ENCODE measurements at regions of chr10 and their contacts with region 1.

Region 1: GRCh38 chr10:103192451-103193106 is 493 bp downstream of the NT5C2 start:
- DNase-seq: peak; percentile 59
- ATAC-seq: peak; percentile 47
- H3K4me3 Mint-ChIP-seq: peak overlapping the region; percentile 99
- H3K27ac Mint-ChIP-seq: peak overlapping the region; percentile 96
- H3K4me1 Mint-ChIP-seq: peaks cover 47% of the 10 kb centered on the region
- H3K27me3 Mint-ChIP-seq: no peaks in the 10 kb centered on the region
- CTCF ChIP-seq: no peak

Region 2: DNA sequence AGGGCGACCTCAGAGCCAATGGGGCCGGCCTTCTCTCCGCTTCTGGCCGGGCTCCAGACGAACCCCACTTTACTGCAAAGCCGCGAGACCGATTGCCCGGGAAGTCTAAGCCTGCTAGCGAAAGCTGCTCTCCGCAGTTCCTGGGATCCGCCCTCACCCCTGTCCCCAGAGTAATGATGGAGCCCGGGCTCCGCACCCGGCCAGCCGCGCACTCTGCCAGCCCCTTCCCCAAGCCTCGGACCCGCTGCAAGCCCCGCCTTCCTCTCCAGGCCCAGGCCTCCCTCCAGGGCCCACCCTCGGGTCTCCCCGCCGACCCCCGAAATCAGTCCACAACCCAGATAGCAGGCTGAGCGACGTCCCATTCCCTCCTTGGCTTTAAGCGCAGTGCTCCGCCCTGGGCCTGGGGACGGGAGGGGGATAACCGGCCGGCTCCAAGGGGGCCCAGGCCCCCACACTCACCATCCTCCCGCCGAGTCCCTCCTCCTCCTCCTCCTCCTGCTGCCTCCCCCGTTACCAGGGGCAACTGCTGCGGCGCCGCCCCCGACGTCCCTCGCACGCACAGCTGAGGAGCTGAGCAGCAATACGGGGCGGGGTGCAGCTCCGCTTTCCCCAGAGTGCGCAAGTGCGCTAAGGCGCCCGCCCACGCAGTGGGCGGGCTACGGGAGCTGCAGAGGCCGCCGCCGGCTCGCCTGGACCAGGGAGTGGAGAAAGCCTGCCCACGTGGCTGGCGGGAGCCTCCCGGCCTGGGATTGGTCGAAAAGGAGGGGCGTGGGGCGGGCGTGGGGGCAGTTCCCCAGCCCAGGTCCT is 478.6 kb before region 1 on chr10 and contains the start of gene ARL3:
- CTCF ChIA-PET with region 1: no interaction called
- POLR2A ChIA-PET with region 1: interaction called, 5 read pairs
- intact Hi-C with region 1: loop called (anchors 5 kb)
- DNase-seq: peak; percentile 89
- ATAC-seq: peak; percentile 85
- H3K4me3 Mint-ChIP-seq: peak within 1 kb of the TSS; percentile 95
- H3K27ac Mint-ChIP-seq: peak within 1 kb of the TSS; percentile 92
- H3K4me1 Mint-ChIP-seq: peaks cover 44% of the 10 kb centered on the region
- H3K27me3 Mint-ChIP-seq: no peaks in the 10 kb centered on the region
- CTCF ChIP-seq: no peak
- total RNA-seq, gene ARL3: 4.1 and 5.1 TPM in 2 replicates

Region 3: GRCh38 chr10:102853944-102854694 is 338.5 kb before region 1 on chr10 and contains the start of gene BORCS7:
- CTCF ChIA-PET with region 1: no interaction called
- POLR2A ChIA-PET with region 1: interaction called, 6 read pairs
- intact Hi-C with region 1: loop called (anchors 1 kb)
- DNase-seq: peak; percentile 72
- ATAC-seq: peak; percentile 99
- H3K4me3 Mint-ChIP-seq: peak within 1 kb of the TSS; percentile 97
- H3K27ac Mint-ChIP-seq: peak within 1 kb of the TSS; percentile 98
- H3K4me1 Mint-ChIP-seq: peaks cover 19% of the 10 kb centered on the region
- H3K27me3 Mint-ChIP-seq: no peaks in the 10 kb centered on the region
- CTCF ChIP-seq: no peak
- total RNA-seq, gene BORCS7: 12.1 and 17.4 TPM in 2 replicates

Region 4: GRCh38 chr10:103139803-103140202 is 52.8 kb before region 1 on chr10:
- CTCF ChIA-PET with region 1: no interaction called
- POLR2A ChIA-PET with region 1: interaction called, 5 read pairs
- intact Hi-C with region 1: loop called (anchors 2 kb)
- DNase-seq: no peak
- ATAC-seq: no peak
- H3K4me3 Mint-ChIP-seq: no peak overlapping the region
- H3K27ac Mint-ChIP-seq: no peak overlapping the region
- H3K4me1 Mint-ChIP-seq: peaks cover 11% of the 10 kb centered on the region
- H3K27me3 Mint-ChIP-seq: no peaks in the 10 kb centered on the region
- CTCF ChIP-seq: no peak

Region 5: DNA sequence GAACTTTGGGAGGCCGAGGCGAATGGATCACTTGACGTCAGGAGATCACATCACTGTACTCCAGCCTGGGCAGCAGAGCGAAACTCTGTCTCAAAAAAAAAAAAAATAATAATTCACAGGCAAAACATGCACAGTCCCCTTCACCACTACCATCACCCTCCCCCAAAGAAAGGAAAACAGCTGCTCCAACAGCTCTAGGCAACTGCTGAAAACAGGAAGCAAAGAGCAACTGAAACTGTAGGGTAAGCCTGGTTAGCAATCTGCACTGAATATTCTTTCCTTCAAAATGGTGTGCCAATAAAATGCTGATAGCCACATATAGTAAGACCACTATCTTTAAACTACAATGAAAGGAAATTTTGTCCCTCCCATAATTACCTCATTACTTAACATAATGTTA is 11.3 kb before region 1 on chr10:
- CTCF ChIA-PET with region 1: interaction called, 5 read pairs
- POLR2A ChIA-PET with region 1: interaction called, 46 read pairs
- intact Hi-C with region 1: loop called (anchors 1 kb)
- DNase-seq: no peak
- ATAC-seq: peak; percentile 92
- H3K4me3 Mint-ChIP-seq: peak overlapping the region; percentile 68
- H3K27ac Mint-ChIP-seq: peak overlapping the region; percentile 89
- H3K4me1 Mint-ChIP-seq: peaks cover 77% of the 10 kb centered on the region
- H3K27me3 Mint-ChIP-seq: no peaks in the 10 kb centered on the region
- CTCF ChIP-seq: no peak

Measured in activated B cell treated with CpG ODN at 0.5 μM for 24 hours (primary cell).